Activated CD4-positive, alpha-beta T cell treated with anti-CD3 and anti-CD28 coated beads for 36 hours (primary cell): ENCODE measurements at regions of chr19 and their contacts with region 1.

Region 1: DNA sequence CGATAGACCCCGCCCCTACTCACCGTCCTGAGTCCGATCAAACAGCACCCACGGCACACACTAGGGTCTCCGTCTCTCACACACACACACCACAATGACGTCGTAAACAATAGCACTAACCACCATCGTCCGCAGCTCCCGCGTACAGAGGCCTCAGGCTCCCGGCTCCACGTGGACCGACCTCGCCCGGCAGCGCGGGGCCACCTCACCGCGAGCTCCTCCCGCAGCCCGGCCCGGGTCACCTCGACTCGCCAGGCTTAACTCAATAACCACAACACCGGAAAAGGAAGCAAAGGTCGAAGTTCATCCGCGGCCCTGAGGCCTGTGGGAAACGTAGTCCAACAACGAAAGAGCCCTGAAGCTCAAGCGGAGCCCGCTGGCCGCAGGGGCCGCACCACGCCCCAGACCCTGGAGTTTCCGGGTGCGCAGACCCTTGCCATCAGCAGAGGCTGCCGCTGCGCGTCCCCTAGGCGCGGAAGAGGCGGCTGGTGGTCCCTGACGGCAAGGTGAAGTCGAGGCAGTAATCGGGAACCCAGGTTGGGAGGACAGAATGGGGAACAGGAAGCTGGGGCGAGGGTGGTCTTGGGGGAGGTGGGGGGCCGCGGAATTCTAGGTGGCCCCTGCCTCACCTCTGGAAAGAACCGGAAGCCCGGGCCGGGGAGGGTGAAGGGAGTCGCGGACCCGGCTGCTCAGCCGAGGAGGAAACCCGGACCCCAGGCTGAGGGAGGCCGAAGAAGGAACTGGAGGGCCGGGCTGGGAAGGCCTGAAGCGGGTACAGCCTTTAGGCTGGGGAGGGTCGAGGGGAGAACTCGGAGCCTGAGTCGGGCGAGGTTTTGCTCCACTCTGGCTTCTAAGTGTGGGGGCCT is at the start of gene ZNF529:
- DNase-seq: peak; percentile 91
- ATAC-seq: peak; percentile 90
- H3K4me3 Mint-ChIP-seq: peak within 1 kb of the TSS; percentile 83
- H3K27ac Mint-ChIP-seq: peak within 1 kb of the TSS; percentile 93
- H3K4me1 Mint-ChIP-seq: peaks cover 27% of the 10 kb centered on the region
- H3K27me3 Mint-ChIP-seq: no peaks in the 10 kb centered on the region
- total RNA-seq, gene ZNF529: 12.5 to 19.2 TPM

Region 2: GRCh38 chr19:36182612-36183244 is 390.5 kb before region 1 on chr19:
- CTCF ChIA-PET with region 1: no interaction called
- POLR2A ChIA-PET with region 1: no interaction called
- intact Hi-C with region 1: no loop called
- DNase-seq: no peak
- ATAC-seq: no peak
- H3K4me3 Mint-ChIP-seq: no peak overlapping the region
- H3K27ac Mint-ChIP-seq: no peak overlapping the region
- H3K4me1 Mint-ChIP-seq: no peaks in the 10 kb centered on the region
- H3K27me3 Mint-ChIP-seq: no peaks in the 10 kb centered on the region

Region 3: DNA sequence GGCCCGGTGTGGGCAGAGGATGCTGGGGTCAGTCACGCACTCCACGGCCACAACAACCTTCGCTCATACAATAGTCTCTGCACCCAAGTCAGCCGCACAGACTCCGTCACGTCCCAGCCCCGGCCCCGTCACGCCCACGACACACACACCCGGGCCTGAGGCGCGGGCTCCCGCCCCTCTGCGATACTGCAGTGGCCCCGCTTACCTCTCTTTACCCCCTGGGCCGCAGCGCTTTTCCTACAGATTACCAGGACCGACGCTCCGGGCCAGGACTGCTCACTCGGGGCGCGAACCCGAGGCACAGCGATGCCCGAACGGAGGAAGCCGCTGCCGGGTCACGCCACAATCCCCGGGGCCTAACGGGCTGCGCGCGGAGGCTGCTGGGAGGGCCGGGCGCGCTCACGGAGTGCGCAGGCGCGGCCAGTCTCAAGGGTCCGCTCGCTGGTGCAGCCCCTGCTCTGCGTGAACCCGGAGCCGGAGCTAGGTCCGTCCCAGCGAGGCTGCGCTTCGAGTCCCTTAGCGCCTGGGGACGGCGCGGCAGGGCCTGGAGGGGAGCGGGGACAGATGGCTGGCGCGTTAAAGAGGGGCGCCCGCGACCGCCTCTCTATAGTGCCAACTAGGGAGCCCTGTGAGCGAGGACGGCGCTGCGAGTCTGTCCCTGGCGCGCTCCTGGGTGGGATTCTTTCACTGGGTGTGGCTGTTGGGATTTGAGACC is 154.8 kb before region 1 on chr19 and contains the start of gene ZFP82:
- CTCF ChIA-PET with region 1: interaction called, 3 read pairs
- POLR2A ChIA-PET with region 1: no interaction called
- intact Hi-C with region 1: loop called in 1 of 2 experiments (anchors 1 kb)
- DNase-seq: peak; percentile 89
- ATAC-seq: peak; percentile 90
- H3K4me3 Mint-ChIP-seq: peak within 1 kb of the TSS; percentile 94
- H3K27ac Mint-ChIP-seq: peak within 1 kb of the TSS; percentile 97
- H3K4me1 Mint-ChIP-seq: peaks cover 12% of the 10 kb centered on the region
- H3K27me3 Mint-ChIP-seq: peaks cover 13% of the 10 kb centered on the region
- total RNA-seq, gene ZFP82: 8.4 to 8.8 TPM

Region 4: DNA sequence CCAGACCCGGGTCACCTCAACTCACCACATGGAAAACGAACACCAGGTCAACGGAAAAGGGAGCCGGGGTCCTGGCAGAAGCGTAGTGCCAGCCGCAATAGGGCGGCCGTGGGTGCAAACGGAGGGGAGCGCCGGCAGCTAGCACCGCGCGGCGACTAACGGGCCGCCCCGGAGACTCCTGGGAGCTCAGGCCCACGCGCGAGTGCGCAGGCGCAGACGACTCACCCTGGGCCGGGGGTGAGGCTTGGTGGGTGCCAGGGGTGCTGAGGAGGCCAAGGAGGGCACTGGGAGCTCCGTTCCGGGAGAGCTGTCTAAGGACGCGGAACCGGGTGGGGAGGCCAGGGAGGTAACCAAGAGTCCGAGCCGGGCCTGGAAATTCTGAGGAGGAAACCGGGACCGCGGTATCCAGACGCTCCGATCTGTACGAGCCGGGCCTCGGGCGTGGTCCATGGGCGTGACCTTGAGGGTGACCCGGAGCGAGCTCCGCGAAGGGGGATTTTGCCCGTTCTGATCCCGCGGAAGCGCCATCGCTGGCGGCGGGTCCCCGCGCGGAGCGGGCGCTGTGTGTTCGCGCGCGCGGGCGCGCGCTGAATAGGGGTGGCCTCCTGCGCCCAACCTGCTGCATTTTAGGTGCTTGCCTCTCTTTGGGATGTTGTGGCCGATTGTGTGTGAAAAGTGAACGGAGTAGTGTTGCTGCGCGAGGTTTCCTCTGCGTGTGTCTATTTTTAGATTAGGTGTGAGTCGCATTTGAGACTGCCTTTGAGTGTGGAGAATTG is 32.0 kb after region 1 on chr19 and contains the start of gene ZNF382:
- CTCF ChIA-PET with region 1: interaction called, 3 read pairs
- POLR2A ChIA-PET with region 1: interaction called, 8 read pairs
- intact Hi-C with region 1: loop called (anchors 1 kb)
- DNase-seq: peak; percentile 94
- ATAC-seq: peak; percentile 86
- H3K4me3 Mint-ChIP-seq: peak within 1 kb of the TSS; percentile 81
- H3K27ac Mint-ChIP-seq: peak within 1 kb of the TSS; percentile 91
- H3K4me1 Mint-ChIP-seq: peaks cover 20% of the 10 kb centered on the region
- H3K27me3 Mint-ChIP-seq: no peaks in the 10 kb centered on the region
- total RNA-seq, gene ZNF382: 14.9 to 20.0 TPM

Region 5: DNA sequence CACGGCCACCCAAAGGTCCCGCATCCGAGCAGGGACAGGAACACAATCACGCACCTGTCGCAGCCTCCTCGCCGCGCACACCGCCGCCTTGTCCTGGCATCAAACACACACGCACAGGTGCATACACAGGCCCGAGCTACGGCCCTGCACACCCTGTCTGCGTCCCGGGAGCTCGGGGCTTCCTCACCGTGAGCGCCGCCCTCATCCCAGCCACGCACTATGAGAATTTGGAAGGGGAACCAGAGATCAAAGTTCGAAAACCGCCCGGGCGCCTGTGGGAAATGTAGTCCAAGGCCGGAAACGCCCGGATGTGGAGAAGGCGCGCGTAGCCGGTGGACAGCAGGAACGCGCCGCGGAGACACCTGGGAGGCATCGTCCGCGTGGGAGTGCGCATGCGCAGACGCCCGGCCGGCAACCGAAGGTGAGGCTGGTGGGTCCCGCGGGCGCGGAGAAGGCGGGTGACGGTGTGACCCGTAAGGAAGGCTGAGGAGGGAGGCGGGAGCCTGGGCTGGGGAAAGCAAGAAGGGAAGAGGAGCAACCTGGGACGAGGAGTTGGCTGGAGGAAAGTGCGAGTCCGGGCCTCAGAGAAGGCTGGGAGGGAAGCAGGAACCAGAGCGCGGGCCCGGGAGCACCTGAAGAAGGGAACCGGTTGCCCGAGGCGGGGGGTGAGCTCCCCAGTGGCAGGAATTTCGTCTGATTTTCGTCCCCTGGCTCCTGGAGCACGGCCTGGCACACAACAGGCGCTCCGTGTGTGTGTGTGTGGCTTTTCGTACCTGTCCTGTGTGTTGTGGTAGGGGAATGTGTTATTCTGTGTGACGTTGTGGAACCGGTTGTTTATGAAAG is 114.2 kb after region 1 on chr19 and contains the start of gene ZNF567:
- CTCF ChIA-PET with region 1: no interaction called
- POLR2A ChIA-PET with region 1: no interaction called
- intact Hi-C with region 1: loop called in 1 of 2 experiments (anchors 1 kb)
- DNase-seq: peak; percentile 99
- ATAC-seq: peak; percentile 93
- H3K4me3 Mint-ChIP-seq: peak within 1 kb of the TSS; percentile 99
- H3K27ac Mint-ChIP-seq: peak within 1 kb of the TSS; percentile 96
- H3K4me1 Mint-ChIP-seq: peaks cover 27% of the 10 kb centered on the region
- H3K27me3 Mint-ChIP-seq: no peaks in the 10 kb centered on the region
- total RNA-seq, gene ZNF567: 7.4 to 8.6 TPM

Region 6: DNA sequence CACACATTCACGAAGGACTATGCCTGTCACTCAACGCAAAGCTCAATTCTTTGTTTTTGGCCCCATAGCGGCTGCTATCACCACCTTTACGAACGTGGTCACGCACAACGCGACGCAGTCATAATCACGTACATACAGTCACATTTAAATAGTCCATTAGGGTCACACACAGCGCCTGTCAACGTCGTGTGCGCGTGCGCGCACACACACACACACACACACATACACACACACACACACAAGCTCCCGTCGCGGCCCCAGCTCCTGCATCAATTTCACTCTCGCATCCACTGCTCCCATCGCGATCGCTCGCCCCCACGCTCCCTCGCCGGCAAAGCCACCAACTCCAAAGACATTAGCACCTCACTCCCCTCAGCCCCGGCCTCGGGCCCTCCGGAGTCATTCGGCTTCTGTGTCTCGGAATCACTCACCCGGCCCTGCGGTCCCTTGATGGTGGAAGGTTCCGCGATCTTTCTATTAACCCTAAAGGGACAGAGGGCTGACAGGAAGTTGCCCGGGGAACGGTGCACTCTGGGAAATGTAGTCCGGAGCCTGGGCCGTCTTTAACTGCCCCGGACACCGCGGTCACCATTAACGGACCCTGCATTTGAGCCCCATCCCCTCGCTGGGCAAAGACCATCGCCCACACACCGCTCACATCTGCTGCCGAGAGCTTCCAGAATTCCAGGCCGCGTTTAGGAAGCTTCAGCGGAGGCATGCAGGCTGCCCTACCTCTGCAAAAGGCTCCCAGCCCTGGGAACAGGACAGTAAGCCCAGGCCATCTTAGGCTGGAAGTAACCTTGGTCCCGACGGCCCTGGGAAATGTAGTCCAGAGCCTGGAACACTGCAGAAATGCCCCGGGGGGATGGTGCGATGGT is 264.9 kb after region 1 on chr19 and contains the start of gene ZNF790:
- CTCF ChIA-PET with region 1: no interaction called
- POLR2A ChIA-PET with region 1: no interaction called
- intact Hi-C with region 1: loop called in 1 of 2 experiments (anchors 1 kb)
- DNase-seq: peak; percentile 92
- ATAC-seq: peak; percentile 97
- H3K4me3 Mint-ChIP-seq: no peak within 1 kb of the TSS
- H3K27ac Mint-ChIP-seq: peak within 1 kb of the TSS; percentile 72
- H3K4me1 Mint-ChIP-seq: peaks cover 2% of the 10 kb centered on the region
- H3K27me3 Mint-ChIP-seq: no peaks in the 10 kb centered on the region
- total RNA-seq, gene ZNF790: 7.1 to 8.8 TPM

Region 7: DNA sequence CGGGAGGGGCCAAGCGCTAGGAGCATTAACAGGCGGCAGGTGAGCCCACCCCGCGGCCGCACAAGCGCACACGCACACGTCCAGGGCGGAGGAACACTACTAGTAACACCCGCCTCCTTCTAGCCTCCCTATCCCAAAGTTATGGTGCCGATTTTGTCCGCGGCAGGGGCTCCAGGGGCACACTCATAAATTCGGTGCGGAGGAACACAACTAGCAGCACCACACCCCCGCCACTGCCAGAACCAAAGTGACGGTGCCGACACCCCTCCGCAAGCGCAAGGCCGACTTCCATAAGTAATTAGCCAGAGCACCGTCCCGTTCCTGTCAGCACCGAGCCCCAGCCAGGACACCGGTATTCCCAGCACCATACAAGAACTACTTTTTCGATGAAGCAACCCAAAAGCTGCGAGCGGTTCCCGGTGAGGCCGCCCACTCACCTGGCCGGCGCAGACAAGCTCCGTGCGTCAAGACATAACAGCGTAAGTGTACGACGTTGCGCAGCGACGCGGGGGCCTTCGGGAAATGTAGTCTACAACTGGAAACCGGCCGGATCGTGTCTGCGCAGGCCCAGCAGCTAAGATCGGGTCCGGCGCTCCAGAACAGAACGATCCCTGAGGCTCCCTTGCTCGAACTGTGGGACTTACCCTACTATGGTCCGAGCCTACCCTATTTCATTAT is 1021.2 kb after region 1 on chr19 and contains the starts of genes ZNF540 and ZNF571:
- CTCF ChIA-PET with region 1: no interaction called
- POLR2A ChIA-PET with region 1: no interaction called
- intact Hi-C with region 1: loop called in 1 of 2 experiments (anchors 2 kb)
- DNase-seq: peak; percentile 97
- ATAC-seq: peak; percentile 97
- H3K4me3 Mint-ChIP-seq: peak within 1 kb of the TSS; percentile 94
- H3K27ac Mint-ChIP-seq: peak within 1 kb of the TSS; percentile 99
- H3K4me1 Mint-ChIP-seq: peaks cover 27% of the 10 kb centered on the region
- H3K27me3 Mint-ChIP-seq: no peaks in the 10 kb centered on the region
- total RNA-seq, gene ZNF540: 0.67 to 1.1 TPM
- total RNA-seq, gene ZNF571: 2.4 to 2.9 TPM